Activated naive CD4-positive, alpha-beta T cell treated with anti-CD3 and anti-CD28 coated beads for 36 hours (primary cell): ENCODE measurements at regions of chr1 and their contacts with region 1.

Region 1: DNA sequence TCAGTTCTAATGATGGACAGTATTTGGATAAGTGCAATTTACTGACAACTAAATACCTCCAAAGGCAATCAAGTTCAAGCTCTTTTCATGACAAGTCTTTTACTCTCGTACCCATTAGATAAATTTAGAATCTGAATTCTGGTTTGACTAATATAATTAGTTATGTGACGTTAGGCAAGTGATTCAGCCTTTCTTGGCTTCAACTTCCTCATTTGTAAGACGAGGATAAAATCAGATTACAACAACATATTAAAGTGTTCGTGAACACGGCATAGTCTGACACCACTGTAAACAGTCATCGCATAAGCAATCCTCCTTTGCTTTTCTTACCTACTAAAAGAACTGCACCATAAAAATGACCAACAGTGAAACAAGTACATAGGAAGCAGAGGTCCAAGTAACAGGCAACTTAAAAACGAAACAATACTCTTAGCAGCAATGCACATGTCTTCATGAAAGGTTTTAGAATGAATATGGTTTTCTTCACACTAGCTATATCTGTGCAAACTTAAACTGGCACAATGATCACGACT is 25.7 kb downstream of the COA6 start:
- DNase-seq: peak; percentile 23
- H3K4me3 Mint-ChIP-seq: peak overlapping the region; percentile 60
- H3K27ac Mint-ChIP-seq: peak overlapping the region; percentile 91
- H3K4me1 Mint-ChIP-seq: peaks cover 58% of the 10 kb centered on the region
- H3K27me3 Mint-ChIP-seq: no peaks in the 10 kb centered on the region

Region 2: DNA sequence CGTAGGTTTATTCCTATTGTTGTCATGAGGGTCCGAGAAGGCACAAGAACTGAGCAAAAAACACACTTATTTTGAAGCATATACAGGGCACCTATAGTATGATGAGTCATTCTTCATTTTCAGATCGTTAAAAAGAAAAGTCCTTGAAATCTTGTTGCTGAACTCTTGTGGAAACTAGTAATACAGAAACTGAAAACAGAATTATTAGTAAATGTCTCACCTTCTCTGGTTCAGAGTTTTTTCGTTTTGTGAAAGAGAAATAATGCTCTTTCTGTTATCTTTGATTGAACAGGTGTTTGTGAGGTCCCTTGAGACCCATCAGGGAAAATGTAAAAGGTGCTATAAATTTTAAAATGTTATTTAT is 127.7 kb before region 1 on chr1:
- CTCF ChIA-PET with region 1: no interaction called
- intact Hi-C with region 1: loop called (anchors 2 kb)
- DNase-seq: peak; percentile 22
- H3K4me3 Mint-ChIP-seq: no peak overlapping the region
- H3K27ac Mint-ChIP-seq: no peak overlapping the region
- H3K4me1 Mint-ChIP-seq: peaks cover 26% of the 10 kb centered on the region
- H3K27me3 Mint-ChIP-seq: peaks cover 28% of the 10 kb centered on the region

Region 3: GRCh38 chr1:234373064-234373958 is 25.6 kb before region 1 on chr1 and contains the start of gene COA6:
- CTCF ChIA-PET with region 1: interaction called, 3 read pairs
- intact Hi-C with region 1: loop called (anchors 1 kb)
- DNase-seq: peak; percentile 90
- H3K4me3 Mint-ChIP-seq: peak within 1 kb of the TSS; percentile 96
- H3K27ac Mint-ChIP-seq: peak within 1 kb of the TSS; percentile 98
- H3K4me1 Mint-ChIP-seq: peaks cover 54% of the 10 kb centered on the region
- H3K27me3 Mint-ChIP-seq: no peaks in the 10 kb centered on the region
- total RNA-seq, gene COA6: 45.8 to 50.2 TPM

Region 4: GRCh38 chr1:234478481-234479309 is 79.8 kb after region 1 on chr1 and contains the start of gene TARBP1:
- CTCF ChIA-PET with region 1: no interaction called
- intact Hi-C with region 1: loop called (anchors 2 kb)
- DNase-seq: peak; percentile 77
- H3K4me3 Mint-ChIP-seq: peak within 1 kb of the TSS; percentile 79
- H3K27ac Mint-ChIP-seq: peak within 1 kb of the TSS; percentile 46
- H3K4me1 Mint-ChIP-seq: peaks cover 49% of the 10 kb centered on the region
- H3K27me3 Mint-ChIP-seq: peaks cover 12% of the 10 kb centered on the region
- total RNA-seq, gene TARBP1: 40.2 to 41.6 TPM

Region 5: DNA sequence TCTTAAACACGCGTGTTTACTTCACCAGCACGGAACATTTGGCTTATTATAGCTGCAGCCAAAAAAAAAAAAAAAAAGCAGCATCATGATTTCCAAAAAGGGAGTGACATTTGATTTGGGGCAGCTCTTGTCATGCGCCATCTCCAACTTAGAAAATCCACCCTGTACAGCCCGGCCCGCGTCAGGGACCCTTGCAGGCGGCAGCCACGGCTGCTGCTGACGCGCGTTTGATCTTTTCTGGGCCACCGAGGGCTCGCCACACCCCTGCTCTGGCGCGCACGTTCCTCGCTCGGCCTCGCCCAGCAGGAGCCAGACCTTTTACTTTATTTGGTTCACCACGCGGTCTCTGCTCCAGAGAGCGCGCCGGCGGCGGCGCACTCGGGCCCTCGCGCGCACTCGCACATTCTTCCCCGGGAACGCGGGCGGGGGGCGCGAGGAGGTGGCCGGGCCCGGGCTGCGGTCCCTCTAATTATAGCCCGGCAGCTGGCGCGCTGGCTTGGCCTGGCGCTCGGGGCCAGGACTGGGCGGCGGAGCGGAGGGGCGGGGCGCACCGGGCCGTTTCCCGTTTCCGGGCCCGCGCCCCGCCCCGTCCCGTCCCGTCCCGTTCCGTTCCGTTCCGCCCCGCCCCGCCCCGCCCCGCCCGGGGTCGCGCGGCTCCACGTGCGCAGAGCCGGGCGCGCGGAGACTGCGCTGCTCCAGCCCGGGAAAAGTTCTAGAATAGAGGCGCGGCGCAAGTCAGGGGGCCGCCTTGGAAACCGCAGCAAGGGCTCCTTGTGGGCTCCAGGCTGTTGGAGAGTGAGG is 200.9 kb after region 1 on chr1:
- CTCF ChIA-PET with region 1: interaction called, 4 read pairs
- intact Hi-C with region 1: loop called (anchors 2 kb)
- DNase-seq: peak; percentile 74
- H3K4me3 Mint-ChIP-seq: peak overlapping the region; percentile 83
- H3K27ac Mint-ChIP-seq: peak overlapping the region; percentile 99
- H3K4me1 Mint-ChIP-seq: peaks cover 50% of the 10 kb centered on the region
- H3K27me3 Mint-ChIP-seq: no peaks in the 10 kb centered on the region

Region 6: GRCh38 chr1:234978397-234979295 is 579.7 kb after region 1 on chr1:
- CTCF ChIA-PET with region 1: no interaction called
- intact Hi-C with region 1: loop called (anchors 10 kb)
- DNase-seq: peak; percentile 81
- H3K4me3 Mint-ChIP-seq: peak overlapping the region; percentile 79
- H3K27ac Mint-ChIP-seq: peak overlapping the region; percentile 97
- H3K4me1 Mint-ChIP-seq: peaks cover 59% of the 10 kb centered on the region
- H3K27me3 Mint-ChIP-seq: no peaks in the 10 kb centered on the region